Activated T-helper 1 cell treated with anti-CD3 and anti-CD28 coated beads, Interleukin-12 subunit alpha, Interleukin-12 subunit beta, Interleukin-2, Interleukin-4 antibody, amounts not matched to agents 30 ng/mL and 10 ng/mL and 1 ng/mL, durations not matched to agents 14 hours and 24 hours and 36 hours (primary cell): ENCODE measurements at regions of chr2 and their contacts with region 1.

Region 1: DNA sequence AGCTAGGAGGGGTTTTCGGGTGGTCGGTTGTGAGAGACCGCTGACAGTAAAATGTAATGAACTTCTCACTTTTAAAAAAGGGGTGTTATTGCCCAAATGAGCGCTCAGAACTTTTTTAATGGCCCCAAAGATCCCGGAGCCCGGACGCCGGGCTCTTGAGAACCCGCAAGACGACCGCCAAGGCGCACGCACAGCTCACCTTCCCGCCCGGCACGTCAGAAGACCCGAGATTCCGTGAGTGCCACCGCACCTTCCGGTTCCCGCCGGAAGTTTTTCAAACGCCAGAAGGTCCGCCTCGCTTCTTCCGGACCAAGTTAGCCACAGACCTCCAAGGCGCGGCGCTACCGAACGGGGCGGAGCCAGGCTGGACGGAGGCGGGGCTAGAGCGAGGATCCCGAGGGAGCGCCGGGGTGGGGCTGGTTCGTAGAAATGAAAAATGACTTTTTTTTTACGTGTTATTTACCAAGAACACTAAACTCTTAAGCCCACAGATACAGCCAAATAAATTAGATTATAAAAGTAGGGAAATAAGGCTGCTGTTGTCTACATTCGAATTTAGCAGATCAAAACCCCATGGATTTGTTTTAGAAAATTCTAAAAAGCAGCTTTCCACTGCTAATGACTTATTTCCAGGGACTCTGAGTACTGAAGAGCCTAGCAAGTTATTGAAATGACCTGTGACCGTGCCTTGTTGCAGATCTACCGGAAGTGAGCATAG is at the start of gene SRBD1:
- DNase-seq: peak; percentile 84
- H3K4me3 Mint-ChIP-seq: peak within 1 kb of the TSS; percentile 96
- H3K27ac Mint-ChIP-seq: peak within 1 kb of the TSS; percentile 92
- H3K4me1 Mint-ChIP-seq: peaks cover 27% of the 10 kb centered on the region
- H3K27me3 Mint-ChIP-seq: no peaks in the 10 kb centered on the region
- total RNA-seq, gene SRBD1: 15.2 and 18.3 TPM in 2 replicates

Region 2: DNA sequence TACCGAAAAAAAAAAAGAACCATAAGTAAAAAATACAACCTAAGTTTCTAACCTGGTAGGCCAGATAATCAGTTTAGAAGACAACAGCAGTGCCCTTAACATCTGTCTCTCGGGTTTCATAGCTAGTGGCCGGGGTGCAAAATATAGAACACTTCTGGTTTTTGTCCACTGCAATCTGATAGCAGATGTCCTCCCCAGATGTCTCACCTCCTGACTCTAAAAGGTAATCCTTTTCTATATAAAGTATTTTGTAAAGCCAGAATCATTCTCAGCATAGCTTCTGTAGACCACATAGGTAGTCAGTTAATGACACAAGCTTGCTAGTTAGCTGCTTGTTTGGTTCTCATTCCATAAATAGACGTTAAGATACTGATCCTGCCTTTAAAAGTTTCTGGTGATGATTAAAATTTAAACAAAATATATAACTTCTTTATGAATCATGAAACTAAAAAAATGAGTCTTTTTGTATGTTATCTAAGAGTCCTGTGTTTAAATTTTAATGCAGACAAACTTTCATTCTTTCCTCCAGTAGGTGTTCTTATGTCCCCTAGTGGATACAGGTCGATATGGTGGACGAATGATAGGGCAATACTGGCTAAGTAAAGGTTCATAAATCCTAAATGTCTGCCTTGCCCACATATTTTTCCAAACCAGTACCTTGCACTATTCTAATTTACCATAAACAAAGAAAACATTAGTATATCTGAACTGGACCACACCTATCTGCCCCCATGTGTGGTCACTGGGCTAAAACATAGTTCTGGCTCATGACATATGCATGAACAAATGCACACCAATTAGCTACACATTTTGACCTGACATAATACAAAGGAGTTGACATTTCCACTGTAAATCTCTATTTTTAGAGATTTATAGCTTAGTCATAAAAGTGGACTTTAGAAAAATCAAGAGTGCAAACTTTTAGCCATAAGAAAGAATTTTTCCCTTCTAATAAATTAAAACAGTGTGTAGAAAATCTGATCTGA is 171.1 kb before region 1 on chr2:
- intact Hi-C with region 1: no loop called
- DNase-seq: no peak
- H3K4me3 Mint-ChIP-seq: no peak overlapping the region
- H3K27ac Mint-ChIP-seq: no peak overlapping the region
- H3K4me1 Mint-ChIP-seq: peaks cover 6% of the 10 kb centered on the region
- H3K27me3 Mint-ChIP-seq: no peaks in the 10 kb centered on the region

Region 3: DNA sequence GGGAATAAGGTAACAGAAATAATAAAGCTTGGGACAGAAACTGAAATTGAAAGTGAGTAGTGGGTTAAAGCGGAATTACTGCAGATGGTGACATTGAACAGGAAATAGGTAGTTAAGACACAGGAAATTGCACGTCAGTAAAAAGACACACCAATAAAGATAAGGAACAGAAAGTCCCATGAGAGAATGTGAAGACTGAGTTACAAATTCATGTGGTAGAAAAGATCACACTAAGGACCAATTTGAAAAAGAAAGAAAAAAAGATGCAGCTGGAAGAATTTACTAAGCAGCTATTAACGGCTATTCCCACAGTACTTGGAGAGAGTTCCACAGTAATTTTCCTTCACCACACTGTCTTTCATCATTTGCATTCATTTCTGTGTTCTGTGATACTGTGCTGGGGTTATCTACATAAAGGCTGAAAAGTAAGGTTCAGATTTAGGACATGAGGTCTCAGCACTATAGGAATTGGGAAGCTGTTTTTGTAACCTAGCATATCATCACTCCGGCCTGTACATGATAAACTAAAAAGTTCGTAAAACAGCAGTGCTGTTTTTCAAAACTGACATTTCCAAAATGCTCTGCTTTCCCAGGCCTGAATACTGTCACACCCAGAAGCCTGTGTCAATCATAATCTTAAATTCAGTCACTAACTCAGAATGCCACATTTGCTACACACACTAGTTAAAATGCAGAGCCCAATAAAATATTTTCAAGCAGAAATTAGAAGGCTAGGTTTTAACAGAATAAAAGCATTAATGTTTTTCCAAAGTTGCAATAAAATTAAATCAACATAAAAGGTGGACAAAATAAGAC is 43.0 kb before region 1 on chr2:
- intact Hi-C with region 1: loop called (anchors 1 kb)
- DNase-seq: peak; percentile 10
- H3K4me3 Mint-ChIP-seq: peak overlapping the region; percentile 77
- H3K27ac Mint-ChIP-seq: peak overlapping the region; percentile 94
- H3K4me1 Mint-ChIP-seq: peaks cover 22% of the 10 kb centered on the region
- H3K27me3 Mint-ChIP-seq: no peaks in the 10 kb centered on the region

Region 4: DNA sequence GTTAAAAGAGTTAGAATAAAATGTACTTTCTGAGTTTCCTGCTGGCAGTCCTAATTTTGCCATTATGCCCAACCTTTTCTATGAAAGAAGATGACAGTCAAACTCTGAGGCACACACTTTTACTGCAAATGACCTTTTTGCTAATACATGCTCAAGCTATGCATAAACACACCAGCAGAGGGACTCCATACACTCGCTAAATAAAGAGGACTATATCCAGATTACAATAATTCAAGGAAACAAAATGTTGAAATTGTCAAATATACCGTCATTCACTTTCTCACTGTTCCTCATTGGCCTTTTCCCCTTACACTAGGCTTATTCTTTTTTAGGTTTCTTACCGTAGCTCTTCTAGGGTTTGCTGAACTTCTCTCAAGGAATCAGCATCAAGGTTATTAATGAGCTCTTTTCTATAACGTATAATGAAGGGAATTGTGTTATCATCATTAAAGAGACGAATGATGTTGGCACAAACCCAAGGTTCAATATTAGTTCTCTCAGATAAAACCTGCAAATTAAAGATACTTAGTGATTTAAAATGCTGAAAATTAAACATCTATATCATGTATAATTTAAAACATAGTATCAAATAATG is 25.8 kb before region 1 on chr2:
- intact Hi-C with region 1: loop called (anchors 2 kb)
- DNase-seq: no peak
- H3K4me3 Mint-ChIP-seq: no peak overlapping the region
- H3K27ac Mint-ChIP-seq: no peak overlapping the region
- H3K4me1 Mint-ChIP-seq: peaks cover 10% of the 10 kb centered on the region
- H3K27me3 Mint-ChIP-seq: no peaks in the 10 kb centered on the region

Region 5: DNA sequence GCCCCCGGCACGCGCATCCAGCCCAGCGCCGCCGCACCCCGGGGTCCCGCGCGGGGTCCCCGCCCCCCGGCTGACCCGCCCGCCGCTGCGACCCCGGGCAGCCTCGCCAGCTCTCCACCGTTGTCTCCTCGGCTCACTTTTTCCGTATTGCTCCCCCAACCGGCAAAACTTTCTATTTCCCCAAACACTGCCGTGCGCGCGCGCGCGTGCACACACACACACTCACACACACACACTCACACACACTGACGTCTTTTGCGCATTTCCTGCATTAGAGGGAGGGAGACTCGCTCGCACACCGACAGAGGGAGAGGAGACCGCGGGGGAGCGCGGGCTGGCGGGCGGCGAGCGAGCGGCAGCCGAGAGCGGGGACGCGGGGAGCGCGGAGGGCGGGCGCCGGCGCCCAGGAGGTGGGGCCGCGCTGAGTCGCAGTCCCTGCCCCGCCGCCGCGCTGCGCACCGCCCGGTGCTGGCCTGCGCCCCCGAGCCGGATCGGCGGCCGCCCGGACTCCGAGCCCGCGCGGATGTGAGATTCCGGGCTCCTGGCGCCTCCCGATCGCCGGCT is 39.8 kb after region 1 on chr2:
- intact Hi-C with region 1: loop called (anchors 1 kb)
- DNase-seq: peak; percentile 88
- H3K4me3 Mint-ChIP-seq: peak overlapping the region; percentile 90
- H3K27ac Mint-ChIP-seq: peak overlapping the region; percentile 94
- H3K4me1 Mint-ChIP-seq: peaks cover 28% of the 10 kb centered on the region
- H3K27me3 Mint-ChIP-seq: peaks cover 32% of the 10 kb centered on the region